ENCODE measurements at regions of chr18 and their contacts with region 1.

Region 1: GRCh38 chr18:31325051-31325450 is 7.1 kb downstream of the DSG1 start:
- DNase-seq: no peak
- H3K4me3 ChIP-seq: no peak overlapping the region
- H3K4me3 Mint-ChIP-seq: no peak overlapping the region
- H3K27ac ChIP-seq: no peak overlapping the region
- H3K27ac Mint-ChIP-seq: no peak overlapping the region
- H3K4me1 ChIP-seq: no peaks in the 10 kb centered on the region
- H3K4me1 Mint-ChIP-seq: no peaks in the 10 kb centered on the region
- H3K27me3 ChIP-seq: no peaks in the 10 kb centered on the region
- H3K27me3 Mint-ChIP-seq: peaks cover 0 to 2% (median 0%) of the 10 kb centered on the region in 3 donors
- CTCF ChIP-seq: no peak

Region 2: GRCh38 chr18:31386741-31387140 is 61.7 kb after region 1 on chr18:
- intact Hi-C with region 1: no loop called
- DNase-seq: no peak
- H3K4me3 ChIP-seq: no peak overlapping the region
- H3K4me3 Mint-ChIP-seq: no peak overlapping the region
- H3K27ac ChIP-seq: no peak overlapping the region
- H3K27ac Mint-ChIP-seq: no peak overlapping the region
- H3K4me1 ChIP-seq: no peaks in the 10 kb centered on the region
- H3K4me1 Mint-ChIP-seq: no peaks in the 10 kb centered on the region
- H3K27me3 ChIP-seq: no peaks in the 10 kb centered on the region
- H3K27me3 Mint-ChIP-seq: peaks cover 0 to 2% (median 2%) of the 10 kb centered on the region in 3 donors
- CTCF ChIP-seq: no peak

Region 3: DNA sequence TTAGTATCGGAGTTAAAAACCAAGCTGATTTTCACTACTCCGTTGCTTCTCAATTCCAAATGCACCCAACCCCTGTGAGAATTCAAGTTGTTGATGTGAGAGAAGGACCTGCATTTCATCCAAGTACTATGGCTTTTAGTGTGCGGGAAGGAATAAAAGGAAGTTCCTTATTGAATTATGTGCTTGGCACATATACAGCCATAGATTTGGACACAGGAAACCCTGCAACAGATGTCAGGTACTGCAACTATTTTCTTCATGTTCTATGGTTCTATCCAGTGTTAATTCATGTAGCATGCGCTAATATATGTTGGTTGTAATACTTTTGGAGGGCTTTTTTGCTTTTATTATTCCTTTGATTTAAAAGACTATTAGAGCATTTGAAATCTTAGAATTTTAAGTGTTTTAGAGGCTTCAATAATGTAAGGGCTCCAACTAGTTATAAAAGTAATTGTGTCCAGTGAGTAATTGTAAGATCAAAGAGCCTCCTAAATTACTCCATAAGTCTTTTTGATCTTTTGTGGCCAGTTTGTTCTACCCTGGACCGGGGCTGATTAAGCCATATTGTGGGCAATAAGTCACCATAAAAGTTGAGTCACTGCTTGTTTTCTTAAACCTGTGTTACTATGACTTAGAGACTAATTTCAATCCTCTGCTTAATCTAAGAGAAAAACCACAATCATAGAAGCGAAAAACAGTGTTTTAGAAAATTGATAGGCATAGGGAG is 74.4 kb after region 1 on chr18:
- intact Hi-C with region 1: loop called in 1 of 2 experiments (anchors 10 kb)
- DNase-seq: no peak
- H3K4me3 ChIP-seq: no peak overlapping the region
- H3K4me3 Mint-ChIP-seq: no peak overlapping the region
- H3K27ac ChIP-seq: no peak overlapping the region
- H3K27ac Mint-ChIP-seq: no peak overlapping the region
- H3K4me1 ChIP-seq: no peaks in the 10 kb centered on the region
- H3K4me1 Mint-ChIP-seq: no peaks in the 10 kb centered on the region
- H3K27me3 ChIP-seq: no peaks in the 10 kb centered on the region
- H3K27me3 Mint-ChIP-seq: peaks cover 0 to 2% (median 0%) of the 10 kb centered on the region in 3 donors
- CTCF ChIP-seq: no peak

Region 4: GRCh38 chr18:31876707-31877106 is 551.7 kb after region 1 on chr18:
- intact Hi-C with region 1: no loop called
- DNase-seq: no peak
- H3K4me3 ChIP-seq: no peak overlapping the region
- H3K4me3 Mint-ChIP-seq: no peak overlapping the region
- H3K27ac ChIP-seq: no peak overlapping the region
- H3K27ac Mint-ChIP-seq: peak overlapping the region in 5 of 7 donors; percentile 9 to 54 (median 36)
- H3K4me1 ChIP-seq: no peaks in the 10 kb centered on the region
- H3K4me1 Mint-ChIP-seq: no peaks in the 10 kb centered on the region
- H3K27me3 ChIP-seq: no peaks in the 10 kb centered on the region
- H3K27me3 Mint-ChIP-seq: no peaks in the 10 kb centered on the region
- CTCF ChIP-seq: no peak

Measured in CD14-positive monocyte (primary cell).